GM12878 (cell line): ENCODE measurements at regions of chr11 and their contacts with region 1.

Region 1: DNA sequence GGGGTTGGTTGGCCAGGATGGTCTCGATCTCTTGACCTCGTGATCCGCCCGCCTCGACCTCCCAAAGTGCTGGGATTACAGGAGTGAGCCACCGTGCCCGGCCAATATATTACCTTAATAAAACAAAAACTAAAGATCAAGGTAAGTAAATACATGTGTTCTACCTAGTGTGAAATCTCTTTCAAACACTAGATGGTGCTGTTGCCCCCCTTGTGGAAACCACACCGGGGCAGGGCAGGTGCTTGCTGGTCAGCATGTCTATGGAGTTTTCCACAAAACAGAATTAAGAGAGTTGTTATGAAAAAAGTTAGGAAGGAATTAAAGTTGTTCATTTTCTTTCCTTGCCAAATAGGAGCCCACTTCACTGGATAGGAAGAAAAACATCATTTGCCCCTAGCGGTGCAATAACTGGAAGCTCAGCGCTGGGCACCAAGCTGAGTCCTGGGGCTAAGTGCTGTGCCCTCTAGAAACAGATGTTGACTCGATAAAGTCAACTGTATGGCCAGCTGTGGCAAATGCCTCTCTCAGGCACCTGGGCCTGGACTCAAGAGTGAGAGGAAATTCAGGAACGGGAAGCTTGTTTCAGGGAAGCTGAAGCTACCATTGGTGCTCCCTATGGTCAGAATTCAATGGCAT is 6.3 kb upstream of the KCNJ5 start:
- DNase-seq: no peak
- ATAC-seq: peak; percentile 95
- H3K4me3 ChIP-seq: no peak overlapping the region
- H3K27ac ChIP-seq: no peak overlapping the region
- H3K4me1 ChIP-seq: no peaks in the 10 kb centered on the region
- H3K27me3 ChIP-seq: peaks cover 7 to 8% of the 10 kb centered on the region in 2 experiments; a peak in 3 of 4 replicates
- CTCF ChIP-seq: peak; percentile 67 to 90 (median 71)
- EP300 ChIP-seq: no peak
- POLR2A ChIP-seq: no peak
- RAD21 ChIP-seq: peak; percentile 97

Region 2: GRCh38 chr11:128905345-128906184 is 20.7 kb after region 1 on chr11:
- CTCF ChIA-PET with region 1: interaction called, 74 read pairs
- POLR2A ChIA-PET with region 1: no interaction called
- RAD21 ChIA-PET with region 1: interaction called, 14 read pairs
- SMC1A ChIA-PET with region 1: interaction called, 12 read pairs
- in situ Hi-C with region 1: no loop called
- intact Hi-C with region 1: loop called (anchors 1 kb)
- DNase-seq: no peak
- ATAC-seq: peak; percentile 80
- H3K4me3 ChIP-seq: peak overlapping the region; percentile 60
- H3K27ac ChIP-seq: no peak overlapping the region
- H3K4me1 ChIP-seq: no peaks in the 10 kb centered on the region
- H3K27me3 ChIP-seq: peaks cover 0 to 14% of the 10 kb centered on the region in 2 experiments; a peak in 1 of 4 replicates
- CTCF ChIP-seq: peak; percentile 27 to 48 (median 35); a peak in 4 of 6 replicates
- EP300 ChIP-seq: no peak
- POLR2A ChIP-seq: no peak
- RAD21 ChIP-seq: 0 out of 2 replicates have a peak, but pooled peaks have one; percentile 18

Region 3: GRCh38 chr11:128928400-128928799 is 43.6 kb after region 1 on chr11:
- CTCF ChIA-PET with region 1: interaction called, 26 read pairs
- POLR2A ChIA-PET with region 1: no interaction called
- RAD21 ChIA-PET with region 1: interaction called, 9 read pairs
- SMC1A ChIA-PET with region 1: interaction called, 3 read pairs
- in situ Hi-C with region 1: no loop called
- intact Hi-C with region 1: no loop called
- DNase-seq: peak; percentile 65
- ATAC-seq: peak; percentile 96
- H3K4me3 ChIP-seq: no peak overlapping the region
- H3K27ac ChIP-seq: no peak overlapping the region
- H3K4me1 ChIP-seq: peaks cover 5% of the 10 kb centered on the region
- H3K27me3 ChIP-seq: no peaks in the 10 kb centered on the region
- CTCF ChIP-seq: no peak
- EP300 ChIP-seq: no peak
- POLR2A ChIP-seq: no peak
- RAD21 ChIP-seq: no peak

Region 4: DNA sequence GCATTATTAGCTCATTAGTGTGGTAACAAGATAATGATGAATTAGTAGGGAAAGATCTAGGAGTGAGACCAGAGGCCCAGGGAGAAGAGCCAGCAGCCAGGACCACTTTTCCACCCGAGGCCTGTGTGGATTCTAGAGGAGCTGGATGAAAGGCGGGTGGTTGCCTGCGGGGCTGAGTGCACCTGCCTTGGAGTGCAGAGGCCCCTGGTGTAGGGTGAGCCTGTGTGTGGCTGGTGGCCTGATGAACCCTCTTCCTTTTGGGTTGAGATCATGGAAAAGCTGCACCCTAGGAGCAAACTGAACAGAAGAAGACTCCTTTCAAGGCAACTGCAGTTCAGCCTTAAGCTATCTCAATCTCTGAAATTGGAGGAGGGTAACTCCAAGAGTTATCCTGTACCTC is 63.8 kb after region 1 on chr11:
- CTCF ChIA-PET with region 1: interaction called, 480 read pairs
- POLR2A ChIA-PET with region 1: no interaction called
- RAD21 ChIA-PET with region 1: interaction called, 109 read pairs
- SMC1A ChIA-PET with region 1: interaction called, 249 read pairs
- in situ Hi-C with region 1: no loop called
- intact Hi-C with region 1: no loop called
- DNase-seq: no peak
- ATAC-seq: peak; percentile 48; the same call in 1 of the 3 replicates
- H3K4me3 ChIP-seq: no peak overlapping the region
- H3K27ac ChIP-seq: no peak overlapping the region
- H3K4me1 ChIP-seq: no peaks in the 10 kb centered on the region
- H3K27me3 ChIP-seq: peaks cover 0 to 1% of the 10 kb centered on the region in 2 experiments; a peak in 2 of 4 replicates
- CTCF ChIP-seq: peak in 2 of 3 experiments; percentile 38 to 47; a peak in 3 of 6 replicates
- EP300 ChIP-seq: no peak
- POLR2A ChIP-seq: no peak
- RAD21 ChIP-seq: 0 out of 2 replicates have a peak, but pooled peaks have one; percentile 20

Region 5: GRCh38 chr11:129117595-129118350 is 233.0 kb after region 1 on chr11:
- CTCF ChIA-PET with region 1: no interaction called
- POLR2A ChIA-PET with region 1: no interaction called
- RAD21 ChIA-PET with region 1: no interaction called
- SMC1A ChIA-PET with region 1: no interaction called
- in situ Hi-C with region 1: no loop called
- intact Hi-C with region 1: loop called (anchors 5 kb)
- DNase-seq: no peak
- ATAC-seq: peak; percentile 71
- H3K4me3 ChIP-seq: no peak overlapping the region
- H3K27ac ChIP-seq: no peak overlapping the region
- H3K4me1 ChIP-seq: no peaks in the 10 kb centered on the region
- H3K27me3 ChIP-seq: no peaks in the 10 kb centered on the region
- CTCF ChIP-seq: peak; percentile 74 to 97 (median 81); a peak in 5 of 6 replicates
- EP300 ChIP-seq: no peak
- POLR2A ChIP-seq: no peak
- RAD21 ChIP-seq: peak; percentile 92

Region 6: GRCh38 chr11:129574431-129574830 is 689.6 kb after region 1 on chr11:
- CTCF ChIA-PET with region 1: no interaction called
- POLR2A ChIA-PET with region 1: no interaction called
- RAD21 ChIA-PET with region 1: no interaction called
- SMC1A ChIA-PET with region 1: no interaction called
- in situ Hi-C with region 1: no loop called
- intact Hi-C with region 1: no loop called
- DNase-seq: no peak
- ATAC-seq: no peak
- H3K4me3 ChIP-seq: no peak overlapping the region
- H3K27ac ChIP-seq: no peak overlapping the region
- H3K4me1 ChIP-seq: no peaks in the 10 kb centered on the region
- H3K27me3 ChIP-seq: no peaks in the 10 kb centered on the region
- CTCF ChIP-seq: no peak
- EP300 ChIP-seq: no peak
- POLR2A ChIP-seq: no peak
- RAD21 ChIP-seq: no peak